ENCODE measurements at regions of chr6 and their contacts with region 1.

Region 1: DNA sequence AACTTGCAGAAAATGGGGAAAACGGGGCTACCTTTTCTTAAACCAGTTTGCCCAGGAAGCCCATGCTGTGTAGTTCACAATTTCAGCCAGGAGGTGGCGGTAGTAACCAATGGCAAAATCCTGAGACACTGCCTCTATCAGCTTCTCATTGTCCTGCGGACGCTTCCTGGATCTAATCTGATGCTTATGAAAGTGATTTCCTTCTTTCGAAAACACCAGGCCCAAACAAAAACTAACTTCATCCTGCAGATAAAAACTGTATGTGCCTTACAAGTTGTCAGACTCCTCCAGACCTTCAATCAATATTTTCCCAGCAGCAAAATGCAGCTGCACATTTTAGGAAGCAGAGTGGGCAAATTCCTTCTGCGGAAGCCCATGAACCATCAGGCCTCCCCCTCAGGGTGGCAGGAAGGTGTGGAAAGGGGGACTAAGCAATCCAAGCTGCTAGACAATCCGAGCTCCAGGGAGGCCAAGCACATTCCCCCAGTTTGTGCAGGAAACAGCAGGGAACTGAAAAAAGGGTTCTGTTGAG is 88.5 kb downstream of the LY86 start:
- DNase-seq: peak; percentile 62 to 87 (median 75)
- ATAC-seq: peak; percentile 99
- H3K4me3 ChIP-seq: no peak overlapping the region
- H3K4me3 Mint-ChIP-seq: no peak overlapping the region
- H3K27ac ChIP-seq: no peak overlapping the region
- H3K27ac Mint-ChIP-seq: peak overlapping the region; percentile 25
- H3K4me1 ChIP-seq: peaks cover 3% of the 10 kb centered on the region
- H3K4me1 Mint-ChIP-seq: peaks cover 15% of the 10 kb centered on the region
- H3K27me3 ChIP-seq: no peaks in the 10 kb centered on the region
- H3K27me3 Mint-ChIP-seq: no peaks in the 10 kb centered on the region
- CTCF ChIP-seq: peak; percentile 99

Region 2: GRCh38 chr6:6556738-6557505 is 120.1 kb before region 1 on chr6:
- CTCF ChIA-PET with region 1: no interaction called
- POLR2A ChIA-PET with region 1: no interaction called
- intact Hi-C with region 1: loop called in 1 of 2 experiments (anchors 5 kb)
- DNase-seq: peak in 13 of 14 experiments; percentile 9 to 71 (median 26)
- ATAC-seq: peak; percentile 76
- H3K4me3 ChIP-seq: no peak overlapping the region
- H3K4me3 Mint-ChIP-seq: no peak overlapping the region
- H3K27ac ChIP-seq: no peak overlapping the region
- H3K27ac Mint-ChIP-seq: no peak overlapping the region
- H3K4me1 ChIP-seq: no peaks in the 10 kb centered on the region
- H3K4me1 Mint-ChIP-seq: peaks cover 16% of the 10 kb centered on the region
- H3K27me3 ChIP-seq: no peaks in the 10 kb centered on the region
- H3K27me3 Mint-ChIP-seq: no peaks in the 10 kb centered on the region
- CTCF ChIP-seq: peak; percentile 93

Region 3: DNA sequence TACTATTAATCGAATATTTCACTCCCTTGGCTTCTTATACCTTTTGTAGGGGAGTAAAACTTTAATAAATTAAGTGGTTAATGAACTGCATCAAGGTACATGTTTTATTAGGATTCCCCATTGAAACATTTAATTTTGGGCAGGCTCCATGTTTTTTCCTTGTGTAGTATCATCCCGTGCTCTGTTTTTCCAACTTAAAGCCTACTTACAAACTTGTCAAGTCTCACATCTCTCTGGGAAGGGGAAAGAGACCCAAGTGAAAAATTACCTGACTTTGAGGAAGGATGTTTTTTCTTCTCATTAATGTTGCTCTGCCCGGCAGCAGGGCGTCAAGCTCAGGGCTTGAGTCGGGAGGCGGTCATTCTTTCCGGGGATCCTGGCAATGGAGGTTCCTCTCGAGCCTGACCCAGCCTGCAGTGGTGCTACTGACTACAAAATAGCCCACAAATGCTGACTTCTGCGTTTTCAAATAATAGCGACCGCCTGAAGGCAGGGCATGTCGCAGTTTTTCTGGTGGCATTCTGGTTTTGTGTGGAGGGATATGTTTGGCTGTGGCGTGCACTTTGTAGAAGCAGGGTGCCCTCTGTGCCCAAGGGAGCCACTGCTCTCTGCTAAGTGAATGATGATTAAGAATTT is 866.9 kb after region 1 on chr6:
- CTCF ChIA-PET with region 1: no interaction called
- POLR2A ChIA-PET with region 1: no interaction called
- intact Hi-C with region 1: no loop called
- DNase-seq: no peak
- ATAC-seq: no peak
- H3K4me3 ChIP-seq: no peak overlapping the region
- H3K4me3 Mint-ChIP-seq: peak overlapping the region; percentile 35
- H3K27ac ChIP-seq: no peak overlapping the region
- H3K27ac Mint-ChIP-seq: no peak overlapping the region
- H3K4me1 ChIP-seq: peaks cover 18% of the 10 kb centered on the region
- H3K4me1 Mint-ChIP-seq: peaks cover 20% of the 10 kb centered on the region
- H3K27me3 ChIP-seq: peaks cover 46 to 88% of the 10 kb centered on the region in 2 experiments
- H3K27me3 Mint-ChIP-seq: peaks cover 79% of the 10 kb centered on the region
- CTCF ChIP-seq: no peak

Measured in CD4-positive, alpha-beta T cell (primary cell).